Caco-2 (cell line): ENCODE measurements at regions of chr16 and their contacts with region 1.

Region 1: DNA sequence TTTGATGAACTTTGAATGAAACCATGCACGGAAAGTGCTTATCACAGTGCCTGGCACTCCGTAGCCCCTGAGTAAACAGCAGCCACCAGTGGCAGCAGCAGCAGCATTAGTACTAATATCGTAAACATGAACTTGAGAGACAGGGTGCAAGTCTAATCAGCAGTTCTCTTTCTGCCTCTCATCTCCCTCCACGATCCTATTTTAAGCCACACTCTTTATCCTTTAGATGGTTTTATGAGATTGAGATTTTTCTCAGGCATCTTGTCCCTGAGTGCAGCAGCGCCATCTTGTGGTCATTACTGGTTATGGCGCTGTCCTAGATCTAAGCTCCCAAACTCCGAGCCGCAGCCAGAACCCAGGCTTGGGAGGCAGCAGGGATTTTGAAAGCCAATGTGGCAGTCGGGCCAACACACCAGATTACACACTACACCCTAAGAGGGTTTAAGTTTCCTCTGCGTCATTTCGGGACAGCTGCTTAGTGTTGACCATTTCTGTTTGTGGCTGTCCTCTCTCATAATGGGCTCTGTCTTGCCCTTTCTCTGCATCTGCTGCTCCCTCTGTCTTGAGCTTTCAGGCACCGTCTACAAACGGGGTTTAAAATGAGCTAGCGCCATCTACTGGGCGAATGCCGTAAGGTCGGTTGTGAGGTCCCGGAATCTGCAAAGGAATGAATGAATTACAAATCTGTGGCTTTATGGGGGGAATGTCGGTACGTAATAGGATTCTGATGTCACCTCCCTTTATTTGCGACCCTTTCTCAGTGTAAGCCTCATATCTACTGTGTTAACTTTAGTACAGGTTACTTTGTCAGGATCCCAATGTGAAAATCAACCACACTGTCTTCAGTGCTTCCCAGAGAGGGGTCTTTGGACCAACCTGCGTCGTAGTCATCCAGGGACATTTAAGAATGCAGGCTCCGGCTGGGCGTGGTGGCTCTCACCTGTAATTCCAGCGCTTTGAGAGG is 64.5 kb downstream of the CYLD start:
- DNase-seq: peak; percentile 85 to 88
- H3K4me3 ChIP-seq: peak overlapping the region; percentile 13
- H3K4me3 Mint-ChIP-seq: peak overlapping the region; percentile 67
- H3K27ac Mint-ChIP-seq: no peak overlapping the region
- H3K4me1 ChIP-seq: peaks cover 5% of the 10 kb centered on the region; the same call in 1 of the 2 replicates
- H3K4me1 Mint-ChIP-seq: no peaks in the 10 kb centered on the region
- H3K27me3 ChIP-seq: no peaks in the 10 kb centered on the region
- H3K27me3 Mint-ChIP-seq: peaks cover 3% of the 10 kb centered on the region
- CTCF ChIP-seq: peak; percentile 95 to 96

Region 2: GRCh38 chr16:50210266-50211038 is 595.9 kb before region 1 on chr16:
- CTCF ChIA-PET with region 1: interaction called, 8 read pairs
- POLR2A ChIA-PET with region 1: no interaction called
- intact Hi-C with region 1: loop called (anchors 2 kb)
- DNase-seq: peak; percentile 75 to 80
- H3K4me3 ChIP-seq: no peak overlapping the region
- H3K4me3 Mint-ChIP-seq: no peak overlapping the region
- H3K27ac Mint-ChIP-seq: peak overlapping the region; percentile 69
- H3K4me1 ChIP-seq: peaks cover 29% of the 10 kb centered on the region
- H3K4me1 Mint-ChIP-seq: peaks cover 24% of the 10 kb centered on the region
- H3K27me3 ChIP-seq: no peaks in the 10 kb centered on the region
- H3K27me3 Mint-ChIP-seq: no peaks in the 10 kb centered on the region
- CTCF ChIP-seq: peak; percentile 76 to 91

Region 3: DNA sequence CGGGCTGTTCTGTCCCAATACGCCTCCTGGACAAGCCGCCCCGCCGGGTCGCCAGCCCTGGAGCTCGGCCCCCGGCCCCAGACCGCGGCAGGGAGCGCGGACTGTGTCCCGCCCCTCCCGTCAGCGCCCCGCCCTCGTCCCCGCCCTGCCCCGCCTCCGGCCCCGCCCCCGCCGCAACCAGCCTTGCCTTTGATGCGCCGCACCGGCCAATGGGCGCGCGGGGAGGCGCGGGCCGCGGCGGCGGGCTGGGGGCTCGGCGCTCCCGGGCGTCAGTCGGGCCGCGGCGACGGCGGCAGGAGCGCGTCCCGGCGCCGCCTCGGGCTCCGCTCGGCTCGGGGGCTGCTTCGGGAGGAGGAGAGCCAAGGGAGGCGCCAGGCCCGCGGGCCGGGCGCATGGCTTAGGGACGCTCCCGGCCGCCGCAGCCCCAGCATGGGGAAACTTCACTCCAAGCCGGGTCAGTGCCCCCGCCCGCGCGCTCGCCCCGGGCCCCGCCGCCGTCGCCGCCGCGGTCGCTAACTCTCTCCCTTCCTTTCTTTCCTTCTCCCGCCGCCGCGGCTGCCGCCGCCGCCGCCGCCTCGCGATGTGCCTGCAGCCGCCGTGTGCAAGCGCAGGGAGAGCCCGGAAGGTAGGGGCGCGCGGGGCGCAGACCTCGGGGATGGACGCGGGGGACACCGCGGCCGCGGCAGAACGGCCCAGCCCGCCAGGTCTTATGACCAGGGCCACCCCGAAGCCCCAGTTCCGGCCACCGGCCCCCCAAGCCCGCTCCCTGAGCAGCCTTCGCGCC is 258.1 kb before region 1 on chr16 and contains the start of gene NKD1:
- CTCF ChIA-PET with region 1: interaction called, 10 read pairs
- POLR2A ChIA-PET with region 1: no interaction called
- intact Hi-C with region 1: loop called (anchors 5 kb)
- DNase-seq: peak; percentile 76 to 91
- H3K4me3 ChIP-seq: peak within 1 kb of the TSS; percentile 87
- H3K4me3 Mint-ChIP-seq: peak within 1 kb of the TSS; percentile 73
- H3K27ac Mint-ChIP-seq: peak within 1 kb of the TSS; percentile 81
- H3K4me1 ChIP-seq: no peaks in the 10 kb centered on the region; the same call in 1 of the 2 replicates
- H3K4me1 Mint-ChIP-seq: peaks cover 16% of the 10 kb centered on the region
- H3K27me3 ChIP-seq: no peaks in the 10 kb centered on the region
- H3K27me3 Mint-ChIP-seq: no peaks in the 10 kb centered on the region
- CTCF ChIP-seq: no peak
- total RNA-seq, gene NKD1: 37.9 and 54.9 TPM in 2 replicates

Region 4: GRCh38 chr16:50616883-50617645 is 189.3 kb before region 1 on chr16:
- CTCF ChIA-PET with region 1: no interaction called
- POLR2A ChIA-PET with region 1: no interaction called
- intact Hi-C with region 1: no loop called
- DNase-seq: peak in 1 of 2 experiments; percentile 43
- H3K4me3 ChIP-seq: no peak overlapping the region
- H3K4me3 Mint-ChIP-seq: no peak overlapping the region
- H3K27ac Mint-ChIP-seq: peak overlapping the region; percentile 27
- H3K4me1 ChIP-seq: no peaks in the 10 kb centered on the region
- H3K4me1 Mint-ChIP-seq: no peaks in the 10 kb centered on the region
- H3K27me3 ChIP-seq: no peaks in the 10 kb centered on the region
- H3K27me3 Mint-ChIP-seq: no peaks in the 10 kb centered on the region
- CTCF ChIP-seq: no peak

Region 5: DNA sequence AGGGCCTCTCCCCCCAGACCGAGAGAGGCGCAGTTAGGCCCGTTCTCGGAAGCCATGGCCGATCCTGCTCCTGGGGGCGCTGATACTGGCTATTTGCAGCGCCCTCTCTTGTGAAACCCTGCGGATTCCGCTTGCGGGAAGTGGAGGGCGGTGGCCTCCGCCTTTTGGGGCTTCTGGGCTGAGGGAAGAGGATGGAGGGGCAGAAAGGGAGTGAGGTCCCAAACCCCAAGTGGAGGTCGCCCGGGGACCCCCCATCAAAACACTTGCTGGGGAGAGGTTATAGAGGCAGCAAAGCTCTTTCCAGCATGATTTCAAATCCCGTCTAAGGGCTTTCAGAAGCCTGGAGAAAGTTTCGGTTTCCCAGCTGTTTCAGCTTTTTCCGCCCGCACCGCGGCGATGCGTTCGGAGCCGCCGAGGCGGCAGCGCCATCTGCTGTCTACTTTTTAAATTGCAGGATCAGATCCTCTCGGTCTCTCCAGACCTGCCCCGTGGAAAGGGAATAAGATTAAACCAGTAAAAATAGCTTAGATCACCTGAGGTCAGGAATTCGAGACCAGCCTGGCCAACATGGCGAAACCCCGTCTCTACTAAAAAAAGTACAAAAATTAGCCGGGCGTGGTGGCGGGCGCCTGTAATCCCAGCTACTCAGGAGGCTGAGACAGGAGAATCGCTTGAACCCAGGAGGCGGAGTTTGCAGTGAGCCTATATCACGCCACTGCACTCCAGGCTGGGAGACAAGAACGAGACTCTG is 141.1 kb before region 1 on chr16:
- CTCF ChIA-PET with region 1: interaction called, 188 read pairs
- POLR2A ChIA-PET with region 1: no interaction called
- intact Hi-C with region 1: loop called (anchors 1 kb)
- DNase-seq: peak; percentile 81 to 92
- H3K4me3 ChIP-seq: 0 out of 2 replicates have a peak overlapping the region, but pooled peaks have one; percentile 8
- H3K4me3 Mint-ChIP-seq: peak overlapping the region; percentile 60
- H3K27ac Mint-ChIP-seq: peak overlapping the region; percentile 48
- H3K4me1 ChIP-seq: peaks cover 10% of the 10 kb centered on the region; the same call in 1 of the 2 replicates
- H3K4me1 Mint-ChIP-seq: peaks cover 21% of the 10 kb centered on the region
- H3K27me3 ChIP-seq: no peaks in the 10 kb centered on the region
- H3K27me3 Mint-ChIP-seq: no peaks in the 10 kb centered on the region
- CTCF ChIP-seq: peak; percentile 90

Region 6: DNA sequence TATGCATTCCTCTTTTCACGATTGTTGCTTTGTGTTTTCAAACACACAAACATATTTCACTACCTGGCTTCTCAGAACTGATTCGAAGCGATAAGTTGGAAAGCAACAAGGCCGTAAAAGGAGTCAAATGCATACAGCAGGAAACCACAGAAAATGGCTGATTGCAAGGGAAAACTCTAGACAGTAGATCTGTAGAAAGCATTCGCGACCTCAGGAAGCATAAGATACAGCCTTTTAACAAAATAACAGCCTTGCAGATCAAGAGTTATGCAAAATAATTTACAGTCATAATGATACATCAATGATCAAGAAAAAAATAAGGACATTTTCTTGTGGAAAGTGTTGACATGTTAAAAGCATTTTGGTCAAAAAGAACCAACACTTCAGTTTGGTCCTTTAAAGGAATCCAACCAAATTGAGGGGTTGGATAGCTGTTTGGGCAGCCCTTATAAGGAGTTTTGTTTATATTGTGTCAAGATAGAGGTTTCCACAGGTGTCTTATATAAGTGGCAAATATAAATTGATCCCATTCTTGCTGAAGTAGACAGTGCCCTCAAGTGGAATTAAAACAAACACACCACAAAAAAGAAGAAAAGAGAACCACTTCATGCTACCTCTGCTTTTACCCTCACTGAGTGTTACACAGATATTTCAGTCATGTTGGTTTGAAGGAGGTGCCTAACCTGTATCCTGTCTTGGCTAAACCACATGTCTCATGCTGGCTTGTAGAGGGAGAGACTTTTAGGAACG is 59.0 kb before region 1 on chr16:
- CTCF ChIA-PET with region 1: interaction called, 13 read pairs
- POLR2A ChIA-PET with region 1: no interaction called
- intact Hi-C with region 1: no loop called
- DNase-seq: peak in 1 of 2 experiments; percentile 14
- H3K4me3 ChIP-seq: no peak overlapping the region
- H3K4me3 Mint-ChIP-seq: no peak overlapping the region
- H3K27ac Mint-ChIP-seq: no peak overlapping the region
- H3K4me1 ChIP-seq: no peaks in the 10 kb centered on the region
- H3K4me1 Mint-ChIP-seq: no peaks in the 10 kb centered on the region
- H3K27me3 ChIP-seq: no peaks in the 10 kb centered on the region
- H3K27me3 Mint-ChIP-seq: no peaks in the 10 kb centered on the region
- CTCF ChIP-seq: peak; percentile 26 to 39